Caco-2 (cell line): ENCODE measurements at regions of chr11 and their contacts with region 1.

Region 1: DNA sequence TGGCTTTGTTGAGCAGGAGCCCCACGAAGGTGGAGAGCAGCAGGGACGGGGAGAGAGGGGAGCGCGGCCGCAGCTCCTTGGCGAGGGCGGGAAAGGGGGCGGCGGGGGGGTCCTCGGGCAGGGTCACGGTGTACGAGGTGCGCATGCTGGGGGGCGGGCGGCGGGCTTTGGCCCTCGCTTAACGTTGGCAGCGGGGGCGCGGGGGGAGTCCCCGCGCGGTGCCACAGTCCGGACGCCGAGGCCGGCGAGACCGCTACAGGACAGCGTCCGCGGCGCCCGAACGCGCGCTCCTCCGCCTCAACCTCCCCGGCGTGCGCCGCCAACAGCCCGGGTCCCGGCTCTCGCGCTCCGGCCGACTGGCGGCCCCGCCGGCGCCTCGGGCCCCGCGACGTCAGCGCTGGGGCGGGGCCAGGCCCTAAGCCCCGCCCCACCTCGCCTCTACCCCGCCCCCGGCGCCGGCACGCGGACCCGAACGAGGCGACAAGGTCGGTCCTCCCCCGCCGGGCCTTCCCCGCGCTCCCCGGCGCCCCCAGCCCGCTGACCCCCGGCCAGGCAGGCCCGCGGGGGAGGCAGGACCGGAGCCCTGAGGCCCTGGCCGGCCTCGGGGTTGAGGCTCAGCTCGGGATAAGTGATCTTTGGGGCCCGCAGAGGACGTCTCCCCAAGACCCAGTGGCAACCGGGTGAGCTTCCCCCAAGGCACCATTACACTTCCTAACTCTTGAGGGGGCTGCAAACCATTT is 17.5 kb downstream of the USP2 start:
- DNase-seq: peak in 1 of 2 experiments; percentile 92
- H3K4me3 ChIP-seq: peak overlapping the region; percentile 64
- H3K4me3 Mint-ChIP-seq: peak overlapping the region; percentile 77
- H3K27ac Mint-ChIP-seq: peak overlapping the region; percentile 67
- H3K4me1 ChIP-seq: peaks cover 75% of the 10 kb centered on the region
- H3K4me1 Mint-ChIP-seq: peaks cover 68% of the 10 kb centered on the region
- H3K27me3 ChIP-seq: no peaks in the 10 kb centered on the region
- H3K27me3 Mint-ChIP-seq: no peaks in the 10 kb centered on the region
- CTCF ChIP-seq: no peak

Region 2: GRCh38 chr11:119347242-119347641 is 16.8 kb before region 1 on chr11:
- CTCF ChIA-PET with region 1: interaction called, 220 read pairs
- POLR2A ChIA-PET with region 1: interaction called, 10 read pairs
- intact Hi-C with region 1: loop called (anchors 2 kb)
- DNase-seq: no peak
- H3K4me3 ChIP-seq: no peak overlapping the region
- H3K4me3 Mint-ChIP-seq: no peak overlapping the region
- H3K27ac Mint-ChIP-seq: no peak overlapping the region
- H3K4me1 ChIP-seq: no peaks in the 10 kb centered on the region; the same call in 1 of the 2 replicates
- H3K4me1 Mint-ChIP-seq: no peaks in the 10 kb centered on the region
- H3K27me3 ChIP-seq: no peaks in the 10 kb centered on the region
- H3K27me3 Mint-ChIP-seq: peaks cover 3% of the 10 kb centered on the region
- CTCF ChIP-seq: no peak

Region 3: DNA sequence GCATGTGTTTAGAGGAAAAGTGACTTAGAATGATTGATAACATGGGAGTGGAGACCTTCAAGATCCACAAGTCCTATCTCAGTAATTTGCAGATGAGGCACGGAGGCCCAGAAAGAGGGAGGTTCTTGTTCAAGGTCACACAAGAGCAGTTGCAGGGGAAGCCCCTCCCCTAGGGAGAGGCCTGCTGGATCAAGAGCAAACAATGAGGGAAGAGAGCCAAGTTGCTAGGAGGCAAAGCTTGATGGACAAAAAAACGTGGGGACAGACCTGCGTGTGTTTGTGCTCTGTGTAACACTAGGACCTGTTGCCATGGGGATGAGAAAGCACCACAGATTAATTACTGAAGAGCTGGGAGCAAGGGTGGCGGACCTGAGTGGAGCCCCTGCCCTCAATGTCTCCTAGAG is 11.2 kb before region 1 on chr11:
- CTCF ChIA-PET with region 1: interaction called, 8 read pairs
- POLR2A ChIA-PET with region 1: interaction called, 10 read pairs
- intact Hi-C with region 1: loop called (anchors 2 kb)
- DNase-seq: peak in 1 of 2 experiments; percentile 47
- H3K4me3 ChIP-seq: no peak overlapping the region
- H3K4me3 Mint-ChIP-seq: no peak overlapping the region
- H3K27ac Mint-ChIP-seq: no peak overlapping the region
- H3K4me1 ChIP-seq: peaks cover 7% of the 10 kb centered on the region; the same call in 1 of the 2 replicates
- H3K4me1 Mint-ChIP-seq: peaks cover 8% of the 10 kb centered on the region
- H3K27me3 ChIP-seq: no peaks in the 10 kb centered on the region
- H3K27me3 Mint-ChIP-seq: peaks cover 3% of the 10 kb centered on the region
- CTCF ChIP-seq: no peak

Region 4: DNA sequence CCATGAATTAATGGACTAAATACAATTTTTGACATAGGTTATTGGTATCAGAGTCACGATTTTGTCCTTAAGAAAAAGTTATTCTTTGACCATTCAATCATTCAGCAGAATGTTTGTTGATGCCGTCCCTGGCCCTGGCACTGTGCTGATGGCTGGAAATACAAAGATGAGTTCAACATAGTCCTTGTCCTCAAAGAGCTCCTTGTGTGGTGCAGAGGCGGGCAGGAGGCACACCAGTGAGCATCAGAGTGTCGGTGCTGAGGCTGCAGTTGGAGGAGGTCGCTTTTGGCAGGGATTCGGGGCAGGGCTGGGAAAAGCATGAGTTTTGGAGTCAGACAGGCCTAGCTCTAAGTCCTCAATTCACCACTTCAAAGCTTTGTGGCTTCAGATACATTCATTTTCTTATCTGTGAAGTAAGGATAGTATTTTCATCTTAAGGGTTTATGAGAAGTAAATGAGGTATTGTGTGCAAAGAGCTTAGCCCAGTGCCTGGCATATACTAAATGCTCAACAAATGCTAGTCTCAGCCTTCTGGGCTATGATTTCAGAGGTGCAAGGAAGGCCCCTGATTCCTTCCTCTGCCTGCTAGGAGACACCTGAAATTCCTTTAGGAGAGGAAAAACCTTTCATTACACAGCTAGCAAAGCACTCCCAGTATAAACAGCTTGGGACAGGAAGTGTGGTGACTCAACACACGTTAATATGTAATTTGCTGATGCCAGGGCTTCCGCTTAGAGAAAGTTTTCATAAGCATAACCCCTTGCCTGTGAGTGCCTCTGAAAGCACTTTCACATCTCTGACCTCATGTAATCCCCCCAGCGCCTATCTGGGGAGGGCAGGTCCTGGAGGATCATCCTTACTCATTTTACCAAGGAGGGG is 251.2 kb after region 1 on chr11:
- CTCF ChIA-PET with region 1: no interaction called
- POLR2A ChIA-PET with region 1: no interaction called
- intact Hi-C with region 1: no loop called
- DNase-seq: no peak
- H3K4me3 ChIP-seq: no peak overlapping the region
- H3K4me3 Mint-ChIP-seq: no peak overlapping the region
- H3K27ac Mint-ChIP-seq: no peak overlapping the region
- H3K4me1 ChIP-seq: peaks cover 28% of the 10 kb centered on the region
- H3K4me1 Mint-ChIP-seq: peaks cover 25% of the 10 kb centered on the region
- H3K27me3 ChIP-seq: no peaks in the 10 kb centered on the region
- H3K27me3 Mint-ChIP-seq: no peaks in the 10 kb centered on the region
- CTCF ChIP-seq: no peak